ENCODE measurements at regions of chr3 and their contacts with region 1.

Region 1: GRCh38 chr3:145776782-145777408 is 384.1 kb downstream of the PLOD2 start:
- DNase-seq: peak; percentile 42
- ATAC-seq: peak; percentile 79
- H3K4me3 Mint-ChIP-seq: no peak overlapping the region
- H3K27ac Mint-ChIP-seq: no peak overlapping the region
- H3K4me1 Mint-ChIP-seq: no peaks in the 10 kb centered on the region
- H3K27me3 Mint-ChIP-seq: no peaks in the 10 kb centered on the region
- CTCF ChIP-seq: peak; percentile 72

Region 2: GRCh38 chr3:145739926-145740325 is 37.0 kb before region 1 on chr3:
- CTCF ChIA-PET with region 1: no interaction called
- POLR2A ChIA-PET with region 1: no interaction called
- DNase-seq: no peak
- ATAC-seq: no peak
- H3K4me3 Mint-ChIP-seq: no peak overlapping the region
- H3K27ac Mint-ChIP-seq: no peak overlapping the region
- H3K4me1 Mint-ChIP-seq: peaks cover 3% of the 10 kb centered on the region
- H3K27me3 Mint-ChIP-seq: no peaks in the 10 kb centered on the region
- CTCF ChIP-seq: no peak

Region 3: GRCh38 chr3:145807990-145808389 is 31.1 kb after region 1 on chr3:
- CTCF ChIA-PET with region 1: interaction called, 10 read pairs
- POLR2A ChIA-PET with region 1: no interaction called
- DNase-seq: peak; percentile 13
- ATAC-seq: peak; percentile 93
- H3K4me3 Mint-ChIP-seq: no peak overlapping the region
- H3K27ac Mint-ChIP-seq: no peak overlapping the region
- H3K4me1 Mint-ChIP-seq: no peaks in the 10 kb centered on the region
- H3K27me3 Mint-ChIP-seq: no peaks in the 10 kb centered on the region
- CTCF ChIP-seq: no peak; the same call in 1 of the 2 replicates

Measured in WTC11 (cell line).